ENCODE measurements at regions of chr9 and their contacts with region 1.

Region 1: GRCh38 chr9:77751341-77752091 is 103.4 kb upstream of the GNA14 start:
- DNase-seq: peak in 1 of 5 donors; percentile 36
- H3K4me3 ChIP-seq: peak overlapping the region; percentile 7
- H3K27ac ChIP-seq: no peak overlapping the region
- H3K4me1 ChIP-seq: peaks cover 2% of the 10 kb centered on the region
- H3K27me3 ChIP-seq: no peaks in the 10 kb centered on the region
- CTCF ChIP-seq: peak; percentile 12 to 52 (median 36)
- EP300 ChIP-seq: no peak
- POLR2A ChIP-seq: no peak

Region 2: GRCh38 chr9:77433675-77434445 is 317.7 kb before region 1 on chr9:
- intact Hi-C with region 1: loop called in 2 of 4 experiments (anchors 5 to 10 kb)
- DNase-seq: peak; percentile 57 to 76 (median 73)
- H3K4me3 ChIP-seq: no peak overlapping the region
- H3K27ac ChIP-seq: no peak overlapping the region
- H3K4me1 ChIP-seq: no peaks in the 10 kb centered on the region
- H3K27me3 ChIP-seq: no peaks in the 10 kb centered on the region
- CTCF ChIP-seq: peak; percentile 80 to 93 (median 86)
- EP300 ChIP-seq: no peak
- POLR2A ChIP-seq: no peak

Region 3: DNA sequence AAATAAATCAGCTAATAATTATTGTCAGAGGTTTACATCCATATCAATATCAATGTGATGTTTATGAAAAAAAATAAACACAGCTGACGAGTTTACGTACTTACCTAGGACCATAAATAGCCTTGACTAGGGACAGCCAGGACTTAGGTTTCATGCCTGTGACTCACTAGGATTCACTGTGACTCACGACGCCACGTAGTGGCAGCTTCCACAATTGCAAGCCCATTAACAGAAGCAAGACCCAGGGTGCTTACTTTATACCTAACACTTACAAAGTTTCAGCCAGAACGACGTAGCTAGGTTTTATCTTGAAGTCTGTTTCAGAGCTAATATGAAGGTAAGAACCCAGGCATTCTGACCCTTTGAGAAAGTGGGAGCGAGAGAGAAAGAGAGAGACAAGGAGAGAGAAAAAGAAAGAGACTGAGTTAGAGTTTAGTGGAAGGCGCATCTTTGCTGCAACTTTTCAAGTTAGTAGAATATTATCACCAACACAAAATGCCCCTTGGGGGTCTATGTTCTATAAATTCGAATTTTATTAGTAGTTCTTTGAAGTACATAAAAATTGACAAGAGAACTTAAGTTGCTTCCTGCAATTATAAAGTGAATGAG is 294.6 kb before region 1 on chr9:
- intact Hi-C with region 1: loop called in 1 of 4 experiments (anchors 10 kb)
- DNase-seq: peak; percentile 72 to 91 (median 85)
- H3K4me3 ChIP-seq: no peak overlapping the region
- H3K27ac ChIP-seq: no peak overlapping the region
- H3K4me1 ChIP-seq: peaks cover 5% of the 10 kb centered on the region
- H3K27me3 ChIP-seq: no peaks in the 10 kb centered on the region
- CTCF ChIP-seq: peak; percentile 75 to 91 (median 79)
- EP300 ChIP-seq: no peak
- POLR2A ChIP-seq: no peak

Measured in ovary (tissue), 10 donors.